ENCODE measurements at regions of chr9 and their contacts with region 1.

Region 1: DNA sequence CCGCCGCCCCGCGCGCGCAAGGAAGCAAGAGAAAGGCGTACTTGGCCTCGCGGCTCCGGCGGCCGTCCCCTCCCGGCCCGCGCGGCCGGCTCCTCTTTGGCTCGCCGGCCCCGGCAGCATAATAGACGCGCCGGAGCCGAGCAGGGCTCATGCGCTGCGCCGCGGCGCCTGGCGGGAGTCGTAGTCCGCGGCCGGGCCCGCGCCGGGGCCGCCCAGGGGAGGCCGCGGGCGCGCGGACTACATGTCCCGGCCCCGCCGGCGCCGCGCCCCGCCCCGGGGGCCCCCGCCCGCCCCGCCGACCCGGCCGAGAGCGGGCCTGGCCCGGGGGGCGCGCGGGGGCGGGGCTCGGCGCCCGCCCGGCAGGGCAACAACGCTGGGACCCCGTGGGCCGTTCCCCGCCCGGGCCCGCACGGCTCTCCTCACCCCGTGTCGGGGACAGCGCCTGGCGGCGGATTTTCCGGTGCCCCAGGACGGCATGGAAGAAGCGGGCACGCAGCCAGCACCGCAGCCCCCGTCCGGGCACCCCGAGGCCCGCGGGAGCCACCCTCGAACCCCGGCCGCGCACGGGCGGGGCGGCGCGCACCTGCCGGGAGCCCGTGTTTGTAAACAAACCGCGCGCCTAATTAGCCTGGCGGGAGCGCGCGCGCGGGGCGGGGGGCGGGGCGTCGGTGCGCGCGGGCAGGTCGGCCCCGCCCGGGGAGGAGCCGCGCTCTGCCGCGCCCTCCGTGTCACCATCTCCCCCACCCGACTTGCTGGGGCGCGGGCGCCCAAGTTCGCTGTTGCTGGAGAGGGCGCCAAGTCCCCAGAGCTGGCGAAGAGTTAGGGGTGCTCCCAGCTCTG is at the start of gene BRD3:
- DNase-seq: peak; percentile 83
- ATAC-seq: peak; percentile 84
- H3K4me3 Mint-ChIP-seq: peak within 1 kb of the TSS; percentile 85
- H3K27ac Mint-ChIP-seq: peak within 1 kb of the TSS; percentile 82
- H3K4me1 Mint-ChIP-seq: peaks cover 38% of the 10 kb centered on the region
- H3K27me3 Mint-ChIP-seq: peaks cover 12% of the 10 kb centered on the region
- CTCF ChIP-seq: no peak
- total RNA-seq, gene BRD3: 17.0 and 18.3 TPM in 2 replicates

Region 2: GRCh38 chr9:133955821-133956411 is 112.2 kb before region 1 on chr9:
- CTCF ChIA-PET with region 1: no interaction called
- POLR2A ChIA-PET with region 1: no interaction called
- intact Hi-C with region 1: loop called (anchors 10 kb)
- DNase-seq: no peak
- ATAC-seq: peak; percentile 68
- H3K4me3 Mint-ChIP-seq: peak overlapping the region; percentile 86
- H3K27ac Mint-ChIP-seq: peak overlapping the region; percentile 96
- H3K4me1 Mint-ChIP-seq: peaks cover 71% of the 10 kb centered on the region
- H3K27me3 Mint-ChIP-seq: no peaks in the 10 kb centered on the region
- CTCF ChIP-seq: no peak

Region 3: GRCh38 chr9:134135343-134136118 is 67.4 kb after region 1 on chr9 and contains the start of gene WDR5:
- CTCF ChIA-PET with region 1: interaction called, 3 read pairs
- POLR2A ChIA-PET with region 1: interaction called, 6 read pairs
- intact Hi-C with region 1: loop called (anchors 1 kb)
- DNase-seq: peak; percentile 89
- ATAC-seq: peak; percentile 87
- H3K4me3 Mint-ChIP-seq: peak within 1 kb of the TSS; percentile 89
- H3K27ac Mint-ChIP-seq: peak within 1 kb of the TSS; percentile 90
- H3K4me1 Mint-ChIP-seq: peaks cover 35% of the 10 kb centered on the region
- H3K27me3 Mint-ChIP-seq: no peaks in the 10 kb centered on the region
- CTCF ChIP-seq: no peak
- total RNA-seq, gene WDR5: 20.8 and 22.4 TPM in 2 replicates

Region 4: GRCh38 chr9:134325817-134326723 is 257.9 kb after region 1 on chr9 and contains the start of gene RXRA:
- CTCF ChIA-PET with region 1: no interaction called
- POLR2A ChIA-PET with region 1: no interaction called
- intact Hi-C with region 1: loop called (anchors 5 kb)
- DNase-seq: peak; percentile 58
- ATAC-seq: peak; percentile 72
- H3K4me3 Mint-ChIP-seq: peak within 1 kb of the TSS; percentile 80
- H3K27ac Mint-ChIP-seq: no peak within 1 kb of the TSS
- H3K4me1 Mint-ChIP-seq: peaks cover 11% of the 10 kb centered on the region
- H3K27me3 Mint-ChIP-seq: no peaks in the 10 kb centered on the region
- CTCF ChIP-seq: no peak
- total RNA-seq, gene RXRA: 4.6 and 5.0 TPM in 2 replicates

Region 5: GRCh38 chr9:135500525-135501358 is 1432.6 kb after region 1 on chr9 and contains the start of gene MRPS2:
- CTCF ChIA-PET with region 1: no interaction called
- POLR2A ChIA-PET with region 1: no interaction called
- intact Hi-C with region 1: loop called (anchors 5 kb)
- DNase-seq: peak; percentile 91
- ATAC-seq: peak; percentile 93
- H3K4me3 Mint-ChIP-seq: peak within 1 kb of the TSS; percentile 97
- H3K27ac Mint-ChIP-seq: peak within 1 kb of the TSS; percentile 92
- H3K4me1 Mint-ChIP-seq: peaks cover 30% of the 10 kb centered on the region
- H3K27me3 Mint-ChIP-seq: no peaks in the 10 kb centered on the region
- CTCF ChIP-seq: no peak
- total RNA-seq, gene MRPS2: 35.1 and 39.7 TPM in 2 replicates

Measured in activated B cell treated with CpG ODN at 0.5 μM for 24 hours (primary cell).